ENCODE measurements at regions of chr6 and their contacts with region 1.

Region 1: DNA sequence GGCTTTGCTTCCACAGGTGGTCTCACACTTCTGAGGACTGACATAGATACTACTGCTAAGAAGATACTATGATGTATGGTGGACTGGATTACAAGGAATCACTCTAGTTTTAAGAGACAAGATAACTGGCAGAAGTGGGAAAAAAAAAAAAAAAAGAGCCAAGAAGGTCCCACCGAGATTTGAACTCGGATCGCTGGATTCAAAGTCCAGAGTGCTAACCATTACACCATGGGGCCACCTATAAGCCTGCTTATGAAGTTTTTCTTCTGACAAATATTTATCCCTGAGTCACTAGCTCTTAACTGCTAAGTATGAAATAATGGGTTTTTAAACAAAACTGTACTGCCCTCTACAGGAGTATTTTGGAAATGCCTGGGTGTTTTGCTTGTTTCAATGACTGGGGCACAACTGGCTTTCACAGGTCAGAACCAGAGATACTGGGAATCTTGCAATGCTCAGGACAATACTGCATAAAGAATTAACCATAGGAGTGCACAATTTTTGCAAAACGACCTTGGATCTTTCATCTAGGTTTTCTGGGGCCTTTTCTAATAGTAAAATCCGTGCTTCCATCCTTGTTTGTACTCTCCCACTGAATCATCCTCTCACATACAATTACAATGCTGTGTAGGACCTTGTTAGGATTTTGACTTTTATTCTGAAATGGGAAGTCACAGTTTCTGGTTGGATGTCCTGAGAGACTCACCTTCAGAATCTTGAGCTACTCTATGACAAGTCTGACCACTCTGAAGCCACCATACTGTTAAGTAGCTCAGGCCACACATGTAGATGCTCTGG is 116.3 kb downstream of the OR2B2 start:
- DNase-seq: peak; percentile 90 to 95 (median 92)
- H3K4me3 ChIP-seq: no peak overlapping the region
- H3K27ac ChIP-seq: no peak overlapping the region
- H3K4me1 ChIP-seq: peaks cover 13 to 22% (median 20%) of the 10 kb centered on the region in 4 experiments
- H3K27me3 ChIP-seq: peaks cover 0 to 2% (median 0%) of the 10 kb centered on the region in 5 experiments

Region 2: GRCh38 chr6:27154696-27155095 is 641.2 kb before region 1 on chr6:
- CTCF ChIA-PET with region 1: interaction called, 14 read pairs
- POLR2A ChIA-PET with region 1: no interaction called
- DNase-seq: no peak
- H3K4me3 ChIP-seq: no peak overlapping the region
- H3K27ac ChIP-seq: no peak overlapping the region
- H3K4me1 ChIP-seq: peaks cover 0 to 11% (median 9%) of the 10 kb centered on the region in 4 experiments
- H3K27me3 ChIP-seq: no peaks in the 10 kb centered on the region

Region 3: DNA sequence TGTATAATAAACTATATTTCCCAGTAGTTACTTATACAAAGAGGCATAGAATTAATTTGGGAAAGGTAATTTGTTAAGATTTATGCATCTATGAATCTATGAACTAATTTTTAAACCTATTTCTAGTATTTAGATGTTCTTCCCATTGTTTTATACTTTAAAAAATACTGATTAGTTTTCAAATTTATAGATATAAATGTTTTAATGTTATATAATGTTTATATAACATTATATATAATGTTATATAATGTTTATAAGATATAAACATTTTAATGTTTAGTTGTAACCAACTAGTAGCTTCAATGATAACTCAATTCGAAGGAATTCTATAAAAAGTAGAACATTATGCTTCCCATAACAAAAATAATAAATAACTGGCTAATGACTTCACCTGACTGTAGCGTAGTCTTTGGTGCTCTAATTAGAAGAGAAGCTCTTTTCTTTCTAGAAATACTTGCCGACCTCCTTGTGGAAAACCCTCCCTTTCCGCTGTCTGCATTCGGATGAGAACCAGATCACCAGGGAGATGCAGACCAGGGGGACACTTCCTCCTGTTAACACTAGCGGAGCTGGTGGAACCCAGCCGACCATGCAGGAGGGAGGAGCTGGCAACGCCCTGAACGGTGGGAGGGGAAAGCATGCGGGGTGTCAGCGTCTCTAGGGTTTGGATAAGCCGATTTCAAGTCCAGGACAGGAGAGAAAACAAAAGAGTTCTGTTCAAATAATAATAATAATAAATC is 42.1 kb before region 1 on chr6:
- CTCF ChIA-PET with region 1: interaction called, 12 read pairs
- POLR2A ChIA-PET with region 1: no interaction called
- DNase-seq: peak; percentile 88 to 90 (median 89)
- H3K4me3 ChIP-seq: peak overlapping the region in 6 of 7 experiments; percentile 57 to 97 (median 78)
- H3K27ac ChIP-seq: peak overlapping the region in 1 of 2 experiments; percentile 89
- H3K4me1 ChIP-seq: peaks cover 0 to 36% (median 20%) of the 10 kb centered on the region in 4 experiments
- H3K27me3 ChIP-seq: no peaks in the 10 kb centered on the region

Region 4: DNA sequence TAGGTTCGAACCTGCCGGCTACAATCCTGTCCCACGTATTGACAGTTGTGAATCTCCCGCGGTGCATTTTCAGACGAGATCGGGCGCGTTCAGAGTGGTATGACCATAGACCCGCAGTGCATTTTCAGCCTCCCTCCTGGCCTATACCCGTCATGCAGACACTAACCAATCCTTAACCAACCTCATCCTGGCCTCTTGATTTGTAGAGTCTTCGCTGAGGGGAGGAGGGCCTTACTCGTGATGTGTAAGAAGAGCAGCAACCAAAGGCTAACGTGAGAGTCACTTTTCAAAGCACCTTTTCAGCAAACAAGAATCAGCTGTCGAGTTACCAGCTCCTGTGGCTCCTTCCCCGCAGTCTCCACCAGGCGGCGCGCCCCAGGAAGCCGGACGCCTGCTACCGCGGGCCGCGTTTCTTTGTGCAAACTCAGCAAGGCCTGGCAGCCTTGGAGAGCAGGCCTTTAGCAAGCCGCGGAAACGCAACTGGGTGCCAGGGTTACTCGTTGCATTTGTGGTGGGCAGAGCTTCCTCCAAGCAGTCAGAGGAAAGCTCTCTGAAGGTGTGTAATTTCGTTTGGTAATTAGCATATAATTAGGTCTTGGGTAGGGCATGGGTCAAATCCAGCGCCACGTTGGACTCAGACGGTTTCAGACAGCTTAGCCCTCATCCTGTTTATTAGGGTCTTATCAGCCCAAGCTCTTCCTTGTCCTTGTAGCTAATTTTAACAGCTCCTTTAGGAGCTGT is 23.5 kb before region 1 on chr6:
- CTCF ChIA-PET with region 1: interaction called, 13 read pairs
- POLR2A ChIA-PET with region 1: interaction called, 3 read pairs
- DNase-seq: peak; percentile 91 to 97 (median 94)
- H3K4me3 ChIP-seq: peak overlapping the region in 2 of 7 experiments; percentile 10 to 31
- H3K27ac ChIP-seq: peak overlapping the region in 1 of 2 experiments; percentile 80
- H3K4me1 ChIP-seq: peaks cover 2 to 36% (median 27%) of the 10 kb centered on the region in 4 experiments
- H3K27me3 ChIP-seq: no peaks in the 10 kb centered on the region

Region 5: DNA sequence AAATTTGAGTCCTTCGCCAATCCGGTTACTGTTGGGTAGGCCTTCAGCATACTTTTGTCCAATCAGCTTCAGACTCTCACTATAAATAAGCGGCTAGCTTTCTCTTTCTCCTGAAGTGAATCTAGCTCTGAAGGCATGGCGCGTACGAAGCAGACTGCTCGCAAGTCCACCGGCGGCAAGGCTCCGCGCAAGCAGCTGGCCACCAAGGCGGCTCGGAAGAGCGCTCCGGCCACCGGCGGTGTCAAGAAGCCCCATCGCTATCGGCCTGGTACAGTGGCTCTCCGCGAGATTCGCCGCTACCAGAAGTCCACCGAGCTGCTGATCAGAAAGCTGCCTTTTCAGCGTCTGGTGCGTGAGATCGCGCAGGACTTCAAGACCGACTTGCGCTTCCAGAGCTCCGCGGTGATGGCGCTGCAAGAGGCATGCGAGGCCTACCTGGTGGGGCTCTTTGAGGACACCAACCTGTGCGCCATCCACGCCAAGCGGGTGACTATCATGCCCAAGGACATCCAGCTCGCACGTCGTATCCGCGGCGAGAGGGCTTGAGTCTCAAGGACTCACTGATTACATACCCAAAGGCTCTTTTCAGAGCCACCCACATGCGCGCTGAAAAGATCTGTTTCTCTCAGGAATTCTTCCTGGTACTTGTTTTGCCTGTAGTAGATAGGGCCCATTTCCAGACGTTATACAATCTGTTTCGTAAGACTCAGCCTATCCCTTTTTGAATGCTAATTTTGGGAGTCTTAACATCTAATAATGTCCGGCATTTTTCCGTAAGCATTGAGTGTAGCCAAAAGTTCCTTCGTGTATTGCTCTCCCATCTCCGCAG is 14.3 kb after region 1 on chr6:
- CTCF ChIA-PET with region 1: interaction called, 24 read pairs
- POLR2A ChIA-PET with region 1: interaction called, 5 read pairs
- DNase-seq: peak; percentile 96 to 98 (median 98)
- H3K4me3 ChIP-seq: peak overlapping the region; percentile 73 to 94 (median 85)
- H3K27ac ChIP-seq: peak overlapping the region; percentile 74 to 89
- H3K4me1 ChIP-seq: peaks cover 27 to 67% (median 48%) of the 10 kb centered on the region in 4 experiments
- H3K27me3 ChIP-seq: no peaks in the 10 kb centered on the region